Esophagus muscularis mucosa (tissue), 4 donors: ENCODE measurements at regions of chr11 and their contacts with region 1.

Region 1: GRCh38 chr11:59668950-59669610 is at the start of gene PATL1:
- DNase-seq: peak; percentile 100
- H3K4me3 ChIP-seq: peak within 1 kb of the TSS; percentile 74 to 91 (median 84)
- H3K27ac ChIP-seq: peak within 1 kb of the TSS; percentile 90 to 96 (median 95)
- H3K4me1 ChIP-seq: peaks cover 18 to 45% (median 32%) of the 10 kb centered on the region in 4 donors
- H3K27me3 ChIP-seq: no peaks in the 10 kb centered on the region
- CTCF ChIP-seq: peak in 1 of 3 experiments; percentile 7
- EP300 ChIP-seq: no peak
- POLR2A ChIP-seq: peak; percentile 62
- total RNA-seq, gene PATL1: 12.5 to 18.5 (median 16.1) TPM

Region 2: GRCh38 chr11:59394186-59394585 is 274.9 kb before region 1 on chr11:
- intact Hi-C with region 1: no loop called
- DNase-seq: no peak
- H3K4me3 ChIP-seq: no peak overlapping the region
- H3K27ac ChIP-seq: no peak overlapping the region
- H3K4me1 ChIP-seq: no peaks in the 10 kb centered on the region
- H3K27me3 ChIP-seq: no peaks in the 10 kb centered on the region
- CTCF ChIP-seq: no peak
- EP300 ChIP-seq: no peak
- POLR2A ChIP-seq: no peak

Region 3: GRCh38 chr11:59534676-59535075 is 134.4 kb before region 1 on chr11:
- intact Hi-C with region 1: loop called (anchors 5 kb)
- DNase-seq: no peak
- H3K4me3 ChIP-seq: no peak overlapping the region
- H3K27ac ChIP-seq: no peak overlapping the region
- H3K4me1 ChIP-seq: peaks cover 0 to 12% (median 11%) of the 10 kb centered on the region in 4 donors
- H3K27me3 ChIP-seq: peaks cover 0 to 4% (median 0%) of the 10 kb centered on the region in 4 donors
- CTCF ChIP-seq: no peak
- EP300 ChIP-seq: no peak
- POLR2A ChIP-seq: no peak

Region 4: GRCh38 chr11:59550368-59550841 is 118.7 kb before region 1 on chr11:
- intact Hi-C with region 1: loop called (anchors 5 kb)
- DNase-seq: peak; percentile 94
- H3K4me3 ChIP-seq: peak overlapping the region; percentile 57 to 66 (median 60)
- H3K27ac ChIP-seq: peak overlapping the region; percentile 74 to 89 (median 87)
- H3K4me1 ChIP-seq: peaks cover 0 to 25% (median 19%) of the 10 kb centered on the region in 4 donors
- H3K27me3 ChIP-seq: no peaks in the 10 kb centered on the region
- CTCF ChIP-seq: peak; percentile 13 to 61 (median 37)
- EP300 ChIP-seq: no peak
- POLR2A ChIP-seq: peak; percentile 19

Region 5: DNA sequence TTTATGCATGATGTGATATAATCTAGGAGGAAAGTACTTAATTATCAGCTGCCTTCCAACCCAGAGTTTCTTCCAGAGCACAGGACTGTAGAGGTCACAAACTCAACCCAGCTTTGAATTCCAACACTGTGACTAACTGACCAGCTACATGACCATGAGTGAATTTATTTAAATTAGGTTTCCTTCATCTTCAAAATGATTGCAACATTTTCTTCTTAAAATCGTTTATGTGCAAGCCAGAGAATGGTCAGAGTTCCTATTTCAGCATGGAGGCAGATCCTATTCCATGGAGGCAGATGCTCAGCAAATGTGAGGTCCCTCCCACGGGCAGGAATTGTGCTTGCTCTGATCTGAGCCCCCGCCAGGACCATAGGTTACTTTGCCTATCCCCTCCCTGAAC is 95.8 kb before region 1 on chr11:
- intact Hi-C with region 1: no loop called
- DNase-seq: no peak
- H3K4me3 ChIP-seq: no peak overlapping the region
- H3K27ac ChIP-seq: no peak overlapping the region
- H3K4me1 ChIP-seq: peaks cover 0 to 9% (median 0%) of the 10 kb centered on the region in 4 donors
- H3K27me3 ChIP-seq: no peaks in the 10 kb centered on the region
- CTCF ChIP-seq: no peak
- EP300 ChIP-seq: no peak
- POLR2A ChIP-seq: no peak

Region 6: GRCh38 chr11:59615637-59616395 is 53.3 kb before region 1 on chr11 and contains the start of gene OSBP:
- intact Hi-C with region 1: loop called (anchors 5 kb)
- DNase-seq: peak; percentile 100
- H3K4me3 ChIP-seq: peak within 1 kb of the TSS; percentile 78 to 96 (median 87)
- H3K27ac ChIP-seq: peak within 1 kb of the TSS; percentile 91 to 97 (median 96)
- H3K4me1 ChIP-seq: peaks cover 28 to 49% (median 41%) of the 10 kb centered on the region in 4 donors
- H3K27me3 ChIP-seq: no peaks in the 10 kb centered on the region
- CTCF ChIP-seq: peak in 1 of 3 experiments; percentile 33
- EP300 ChIP-seq: no peak
- POLR2A ChIP-seq: peak; percentile 50
- total RNA-seq, gene OSBP: 32.5 to 40.0 (median 33.3) TPM

Region 7: DNA sequence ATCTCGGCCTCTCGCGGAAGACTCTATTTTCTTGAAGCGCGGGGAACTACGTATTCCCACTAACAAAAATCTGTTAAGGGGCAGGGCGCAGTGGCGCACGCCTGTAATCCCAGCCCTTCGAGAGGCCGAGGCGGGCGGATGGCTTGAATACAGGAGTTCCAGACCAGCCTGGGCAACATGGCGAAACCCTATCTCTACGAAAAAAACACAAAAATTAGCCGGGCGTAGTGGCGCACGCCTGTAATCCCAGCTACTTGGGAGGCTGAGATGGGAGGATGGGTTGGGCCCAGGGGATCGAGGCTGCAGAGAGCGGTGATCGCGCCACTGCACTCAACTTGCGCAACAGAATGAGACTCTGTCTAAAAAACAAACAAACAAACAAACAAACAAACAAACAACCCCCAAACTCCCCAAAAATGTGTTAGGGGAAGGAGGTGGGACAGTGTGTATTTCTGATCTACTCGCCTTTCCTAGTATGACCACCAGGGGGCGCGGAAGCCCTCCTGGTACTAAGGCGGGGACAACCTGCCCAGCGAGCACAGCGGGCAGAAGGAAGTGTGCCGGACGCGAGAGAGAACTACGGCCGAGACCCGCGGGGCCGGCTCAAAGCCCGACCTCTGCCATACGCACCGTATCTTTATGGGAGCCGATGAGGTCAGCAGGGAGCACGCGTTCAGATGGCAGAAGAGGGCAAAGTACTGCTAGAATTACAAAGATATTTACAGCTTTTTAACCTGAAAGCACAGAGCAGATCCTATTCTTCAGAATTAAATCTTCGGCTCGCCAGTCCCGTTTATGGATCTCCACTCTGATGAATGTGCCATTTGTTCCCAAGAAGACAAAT is 84.8 kb after region 1 on chr11:
- intact Hi-C with region 1: loop called (anchors 5 kb)
- DNase-seq: peak; percentile 97
- H3K4me3 ChIP-seq: peak overlapping the region; percentile 81 to 98 (median 84)
- H3K27ac ChIP-seq: peak overlapping the region; percentile 90 to 96 (median 94)
- H3K4me1 ChIP-seq: peaks cover 13 to 31% (median 23%) of the 10 kb centered on the region in 4 donors
- H3K27me3 ChIP-seq: no peaks in the 10 kb centered on the region
- CTCF ChIP-seq: peak; percentile 87 to 98 (median 91)
- EP300 ChIP-seq: no peak
- POLR2A ChIP-seq: no peak

Region 8: DNA sequence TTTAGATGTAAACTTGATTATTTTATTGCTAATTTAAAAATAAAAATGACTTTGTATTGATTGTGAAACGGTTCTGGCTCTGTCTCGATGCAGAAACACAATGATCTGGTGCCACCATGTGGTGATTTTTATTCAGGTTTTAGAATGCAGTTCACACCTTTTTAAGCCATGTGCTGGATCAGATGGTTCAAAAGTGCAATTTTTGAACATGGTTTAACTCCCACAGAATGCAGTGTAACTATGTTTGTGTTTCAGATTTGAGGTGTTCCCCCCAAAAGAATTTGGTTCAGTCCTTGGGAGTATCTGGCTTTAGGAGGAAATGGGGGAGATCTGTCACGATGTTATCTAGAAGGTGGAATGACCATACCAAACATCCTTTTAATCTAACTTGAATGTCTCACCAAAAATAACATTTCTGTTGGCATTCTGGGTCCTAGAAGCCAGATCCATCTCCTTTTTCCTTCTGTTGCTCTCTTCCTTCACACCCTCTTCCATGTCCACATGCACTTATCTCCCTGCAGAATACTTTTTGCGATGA is 133.6 kb after region 1 on chr11:
- intact Hi-C with region 1: loop called (anchors 10 kb)
- DNase-seq: no peak
- H3K4me3 ChIP-seq: no peak overlapping the region
- H3K27ac ChIP-seq: peak overlapping the region in 1 of 4 donors; percentile 32
- H3K4me1 ChIP-seq: peaks cover 6 to 9% (median 7%) of the 10 kb centered on the region in 4 donors
- H3K27me3 ChIP-seq: no peaks in the 10 kb centered on the region
- CTCF ChIP-seq: peak; percentile 52 to 68 (median 64)
- EP300 ChIP-seq: no peak
- POLR2A ChIP-seq: no peak